Activated T-helper 2 cell treated with anti-CD3 and anti-CD28 coated beads, Interferon-gamma antibody, Interleukin-2, Interleukin-4, amounts not matched to agents 10 μg/mL and 5 μg/mL and 100 μg/mL, durations not matched to agents 14 hours and 24 hours and 36 hours (primary cell): ENCODE measurements at regions of chrX and their contacts with region 1.

Region 1: DNA sequence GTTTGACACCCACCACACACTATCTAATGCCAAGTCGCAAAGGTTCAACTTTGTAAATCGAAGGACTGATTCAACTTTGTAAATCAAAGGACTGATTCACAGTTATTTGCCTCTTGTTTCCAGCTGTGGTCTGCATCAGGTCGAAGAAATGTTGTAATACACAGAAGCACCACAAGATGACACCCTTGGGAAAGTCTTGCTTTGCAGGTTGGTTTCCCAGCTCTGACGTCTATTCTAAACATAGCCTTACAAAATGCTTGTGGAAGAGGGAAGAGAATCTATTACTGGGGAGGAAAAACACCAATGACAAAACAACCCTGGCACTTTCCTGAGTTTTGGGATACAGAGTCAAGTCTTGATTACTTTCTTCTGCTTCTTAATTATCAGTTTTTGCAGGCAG is 35.3 kb downstream of the SUPT20HL1 start:
- DNase-seq: peak; percentile 14
- H3K4me3 Mint-ChIP-seq: no peak overlapping the region
- H3K27ac Mint-ChIP-seq: no peak overlapping the region
- H3K4me1 Mint-ChIP-seq: no peaks in the 10 kb centered on the region
- H3K27me3 Mint-ChIP-seq: peaks cover 12% of the 10 kb centered on the region

Region 2: DNA sequence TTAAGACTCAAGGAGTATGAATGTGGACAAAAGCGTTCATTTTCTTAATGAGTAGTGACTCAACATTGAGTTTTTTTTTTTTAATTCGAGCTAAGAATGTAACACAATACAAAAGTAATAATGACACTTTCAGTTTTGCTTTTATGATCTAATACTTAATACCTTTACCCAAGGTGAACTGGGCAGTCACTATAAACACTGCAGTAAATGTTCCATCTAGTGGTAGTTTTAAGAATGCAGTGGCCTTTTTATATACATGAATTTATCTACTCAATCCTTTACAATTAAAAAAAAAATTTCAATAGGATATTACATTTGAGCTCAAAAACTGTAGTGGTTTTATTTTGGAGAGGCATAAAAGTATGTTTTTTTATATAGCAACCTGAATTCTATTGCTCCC is 103.2 kb after region 1 on chrX:
- intact Hi-C with region 1: loop called (anchors 1 kb)
- DNase-seq: no peak
- H3K4me3 Mint-ChIP-seq: no peak overlapping the region
- H3K27ac Mint-ChIP-seq: no peak overlapping the region
- H3K4me1 Mint-ChIP-seq: peaks cover 15% of the 10 kb centered on the region
- H3K27me3 Mint-ChIP-seq: no peaks in the 10 kb centered on the region

Region 3: DNA sequence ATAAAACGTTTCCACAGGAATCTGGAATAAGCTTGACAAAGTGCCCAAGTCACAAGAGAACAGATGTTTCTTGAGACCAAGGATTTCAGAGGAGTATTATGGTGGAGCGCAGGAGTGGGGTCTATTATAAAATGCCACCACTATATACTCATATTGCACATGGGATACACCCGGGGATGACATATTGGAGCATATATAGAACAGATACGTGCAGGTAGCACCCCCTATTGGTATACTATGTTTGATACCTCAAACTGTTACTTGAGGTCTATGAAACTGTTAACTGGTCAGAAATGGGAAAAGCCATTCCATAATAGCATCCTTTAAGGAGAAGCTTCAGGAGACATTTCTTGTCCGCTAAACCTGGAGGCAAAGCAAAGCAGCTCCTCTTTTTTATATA is 165.3 kb after region 1 on chrX:
- intact Hi-C with region 1: loop called (anchors 2 kb)
- DNase-seq: no peak
- H3K4me3 Mint-ChIP-seq: no peak overlapping the region
- H3K27ac Mint-ChIP-seq: no peak overlapping the region
- H3K4me1 Mint-ChIP-seq: no peaks in the 10 kb centered on the region
- H3K27me3 Mint-ChIP-seq: no peaks in the 10 kb centered on the region

Region 4: GRCh38 chrX:24732766-24733500 is 337.2 kb after region 1 on chrX:
- intact Hi-C with region 1: loop called (anchors 10 kb)
- DNase-seq: no peak
- H3K4me3 Mint-ChIP-seq: no peak overlapping the region
- H3K27ac Mint-ChIP-seq: no peak overlapping the region
- H3K4me1 Mint-ChIP-seq: no peaks in the 10 kb centered on the region
- H3K27me3 Mint-ChIP-seq: no peaks in the 10 kb centered on the region